ENCODE measurements at regions of chr19 and their contacts with region 1.

Region 1: DNA sequence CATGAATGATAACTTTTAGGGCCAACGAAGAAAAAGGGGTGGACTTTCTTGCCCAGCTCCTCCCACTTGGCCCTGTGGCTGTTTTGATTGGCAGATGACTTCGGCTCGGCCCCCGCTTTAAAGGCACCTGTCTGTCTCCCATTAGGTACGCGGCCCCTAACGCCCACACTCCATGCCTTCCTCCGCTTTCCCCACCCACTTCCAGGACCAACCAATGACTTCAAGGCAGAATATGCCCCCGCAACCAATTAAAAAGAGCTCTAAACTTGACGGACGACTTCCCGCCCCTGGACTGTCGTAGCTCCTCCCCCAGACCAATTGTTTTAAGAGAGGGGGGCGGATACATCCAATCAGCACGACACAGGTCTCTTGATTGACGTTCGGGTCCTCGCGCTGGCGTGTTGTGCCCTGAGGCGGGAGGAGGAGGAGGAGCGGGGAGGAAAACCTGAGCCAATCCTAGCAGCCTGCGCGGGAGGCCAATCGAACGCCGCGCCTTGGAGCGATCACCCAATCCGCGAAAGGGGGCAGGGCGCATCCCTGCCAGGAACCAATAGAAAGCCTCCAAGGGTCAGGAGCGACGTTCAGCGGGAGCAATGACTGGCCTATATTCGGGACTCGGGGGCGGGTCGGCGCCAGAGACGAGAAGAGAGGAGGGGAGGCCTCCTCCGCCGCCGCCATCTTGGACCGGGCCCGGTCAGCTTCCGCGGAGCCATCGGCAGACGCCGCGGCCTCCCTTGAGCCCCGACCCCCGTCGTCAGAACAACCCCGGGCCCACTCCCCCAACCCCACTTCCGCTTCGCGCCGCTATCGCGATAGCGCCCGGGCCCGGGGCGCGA is at the start of gene CNOT3:
- DNase-seq: peak; percentile 100
- ATAC-seq: peak; percentile 87
- H3K4me3 ChIP-seq: peak within 1 kb of the TSS; percentile 51
- H3K27ac ChIP-seq: peak within 1 kb of the TSS; percentile 71
- H3K4me1 ChIP-seq: peaks cover 10% of the 10 kb centered on the region
- H3K27me3 ChIP-seq: no peaks in the 10 kb centered on the region
- CTCF ChIP-seq: no peak
- POLR2A ChIP-seq: peak; percentile 87
- RAD21 ChIP-seq: no peak
- total RNA-seq, gene CNOT3: 5.4 and 10.6 TPM in 2 replicates

Region 2: GRCh38 chr19:53867225-53868090 is 269.8 kb before region 1 on chr19 and contains the start of gene MYADM:
- CTCF ChIA-PET with region 1: no interaction called
- POLR2A ChIA-PET with region 1: interaction called, 3 read pairs
- dilution Hi-C with region 1: no loop called
- in situ Hi-C with region 1: no loop called
- intact Hi-C with region 1: loop called (anchors 1 kb)
- DNase-seq: peak; percentile 97
- ATAC-seq: peak; percentile 81
- H3K4me3 ChIP-seq: peak within 1 kb of the TSS; percentile 95
- H3K27ac ChIP-seq: peak within 1 kb of the TSS; percentile 97
- H3K4me1 ChIP-seq: peaks cover 7% of the 10 kb centered on the region
- H3K27me3 ChIP-seq: no peaks in the 10 kb centered on the region
- CTCF ChIP-seq: no peak
- POLR2A ChIP-seq: peak; percentile 97
- RAD21 ChIP-seq: no peak
- total RNA-seq, gene MYADM: 4.8 and 5.3 TPM in 2 replicates

Region 3: GRCh38 chr19:54115109-54116063 is 21.9 kb before region 1 on chr19 and contains the starts of genes PRPF31 and TFPT:
- CTCF ChIA-PET with region 1: no interaction called
- POLR2A ChIA-PET with region 1: interaction called, 10 read pairs
- dilution Hi-C with region 1: no loop called
- in situ Hi-C with region 1: no loop called
- intact Hi-C with region 1: loop called (anchors 2 kb)
- DNase-seq: peak; percentile 98
- ATAC-seq: peak; percentile 97
- H3K4me3 ChIP-seq: peak within 1 kb of the TSS; percentile 61
- H3K27ac ChIP-seq: peak within 1 kb of the TSS; percentile 94
- H3K4me1 ChIP-seq: peaks cover 6% of the 10 kb centered on the region
- H3K27me3 ChIP-seq: no peaks in the 10 kb centered on the region
- CTCF ChIP-seq: no peak
- POLR2A ChIP-seq: peak; percentile 68; the same call in 1 of the 2 replicates
- RAD21 ChIP-seq: no peak
- total RNA-seq, gene PRPF31: 66.1 and 66.9 TPM in 2 replicates
- total RNA-seq, gene TFPT: 7.9 and 11.9 TPM in 2 replicates

Region 4: DNA sequence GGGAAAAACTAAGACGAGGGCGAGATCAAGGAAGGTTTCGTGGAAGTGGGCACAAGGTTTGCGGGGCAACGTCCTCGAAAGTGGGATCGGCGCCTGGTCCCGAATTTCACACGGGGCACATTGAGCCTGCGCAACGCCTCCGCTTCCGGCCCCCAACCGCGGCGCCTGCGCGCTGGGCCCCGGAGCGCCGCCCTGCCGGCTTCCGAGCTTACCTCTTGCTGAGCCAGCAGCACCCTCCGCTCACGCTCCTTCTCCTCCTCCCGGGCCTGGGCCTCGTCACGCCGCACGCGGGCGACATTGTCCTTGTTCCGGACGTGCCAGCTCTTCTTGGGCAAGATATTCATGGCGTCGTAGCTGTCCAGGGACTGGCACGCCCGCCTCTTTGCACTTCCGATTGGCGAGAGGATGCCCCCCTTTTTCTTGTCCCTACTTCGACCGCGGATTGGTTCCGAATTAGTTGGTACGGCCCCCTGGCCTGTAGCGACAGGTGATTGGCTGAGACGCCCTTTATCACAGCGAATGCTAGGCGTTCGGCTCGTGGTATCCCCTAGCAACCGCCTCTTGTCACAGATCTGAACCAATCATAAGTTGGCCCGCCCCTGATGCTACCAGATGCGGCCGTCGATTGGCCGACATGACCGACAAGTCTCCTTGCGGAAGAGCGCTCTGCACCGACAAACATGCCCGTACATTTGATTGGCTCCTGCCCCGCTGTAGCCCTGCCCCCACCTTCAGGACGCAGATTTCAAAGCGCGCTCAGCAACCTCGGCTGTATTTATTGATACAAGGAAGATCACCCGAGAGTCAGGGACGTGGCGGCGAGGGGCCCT is 22.3 kb after region 1 on chr19 and contains the start of gene LENG1:
- CTCF ChIA-PET with region 1: no interaction called
- POLR2A ChIA-PET with region 1: interaction called, 5 read pairs
- dilution Hi-C with region 1: no loop called
- in situ Hi-C with region 1: no loop called
- intact Hi-C with region 1: loop called (anchors 1 kb)
- DNase-seq: peak; percentile 100
- ATAC-seq: peak; percentile 91
- H3K4me3 ChIP-seq: peak within 1 kb of the TSS; percentile 60
- H3K27ac ChIP-seq: peak within 1 kb of the TSS; percentile 88
- H3K4me1 ChIP-seq: peaks cover 11% of the 10 kb centered on the region
- H3K27me3 ChIP-seq: no peaks in the 10 kb centered on the region
- CTCF ChIP-seq: peak; percentile 33; the same call in 1 of the 2 replicates
- POLR2A ChIP-seq: peak; percentile 96
- RAD21 ChIP-seq: no peak
- total RNA-seq, gene LENG1: 2.7 and 5.0 TPM in 2 replicates

Region 5: DNA sequence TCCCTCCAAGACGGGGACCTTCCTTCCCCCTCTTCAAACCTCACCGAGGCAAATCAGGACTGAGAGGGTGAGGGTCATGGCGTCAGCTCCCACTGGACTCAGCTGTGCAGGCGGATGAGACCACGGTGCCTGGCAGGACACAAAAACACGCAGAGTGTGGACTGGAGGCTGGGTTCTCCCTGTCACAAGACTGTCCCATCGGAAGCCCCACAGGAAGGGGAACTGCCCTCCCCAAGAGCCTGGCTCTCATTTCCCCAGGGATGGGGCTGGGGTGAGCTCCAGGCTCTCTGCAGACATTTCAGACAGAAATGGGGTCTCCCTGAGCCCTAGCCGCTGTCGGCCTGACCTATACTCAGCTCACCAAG is 119.8 kb after region 1 on chr19 and contains the start of gene LILRB5:
- CTCF ChIA-PET with region 1: no interaction called
- POLR2A ChIA-PET with region 1: no interaction called
- dilution Hi-C with region 1: no loop called
- in situ Hi-C with region 1: no loop called
- intact Hi-C with region 1: no loop called
- DNase-seq: no peak
- ATAC-seq: no peak
- H3K4me3 ChIP-seq: no peak within 1 kb of the TSS
- H3K27ac ChIP-seq: no peak within 1 kb of the TSS
- H3K4me1 ChIP-seq: no peaks in the 10 kb centered on the region
- H3K27me3 ChIP-seq: peaks cover 22% of the 10 kb centered on the region
- CTCF ChIP-seq: no peak
- POLR2A ChIP-seq: no peak
- RAD21 ChIP-seq: no peak
- total RNA-seq, gene LILRB5: not detected in 2 replicates

Region 6: DNA sequence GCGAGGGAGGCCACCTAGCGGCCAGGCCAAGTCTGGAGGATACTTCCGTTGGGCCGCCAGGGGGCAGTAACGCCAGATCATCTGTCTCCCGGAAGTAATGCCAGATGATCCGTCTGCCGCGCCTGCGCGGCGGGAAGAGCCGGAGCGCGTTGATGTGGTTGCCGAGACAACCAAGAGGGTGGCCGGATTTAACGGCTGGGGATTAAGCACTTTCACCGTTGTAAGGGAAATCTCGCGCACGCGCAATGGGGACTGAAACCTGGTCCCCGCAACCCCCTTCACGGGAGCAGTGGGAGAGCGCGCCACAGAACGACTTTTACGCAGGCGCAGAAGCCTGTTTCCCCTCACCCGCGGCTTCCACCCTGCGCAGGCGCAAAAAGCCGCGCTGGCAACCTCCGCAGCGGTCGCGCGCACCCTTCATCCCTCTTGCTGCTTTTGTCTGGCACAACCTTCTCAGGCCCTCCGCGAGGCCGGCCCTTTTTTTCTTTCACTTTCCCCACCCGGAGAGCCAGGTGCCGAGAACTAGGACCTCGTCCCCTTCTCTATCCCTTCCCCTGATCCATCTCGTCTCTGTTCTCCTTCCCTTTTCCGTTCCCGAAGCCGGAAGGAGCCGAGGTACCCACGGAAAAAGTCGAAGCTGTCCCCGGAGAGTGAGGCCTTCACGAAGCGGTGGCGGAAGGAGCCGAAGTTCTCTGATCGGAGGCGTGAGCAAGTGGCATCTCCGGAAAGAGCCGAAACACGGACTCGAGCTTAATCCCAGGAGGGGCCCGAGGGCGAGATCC is 1516.6 kb after region 1 on chr19:
- CTCF ChIA-PET with region 1: interaction called, 3 read pairs
- POLR2A ChIA-PET with region 1: no interaction called
- dilution Hi-C with region 1: no loop called
- in situ Hi-C with region 1: loop called (anchors 25 kb)
- intact Hi-C with region 1: no loop called
- DNase-seq: peak; percentile 99
- ATAC-seq: peak; percentile 81
- H3K4me3 ChIP-seq: peak overlapping the region; percentile 71
- H3K27ac ChIP-seq: peak overlapping the region; percentile 98
- H3K4me1 ChIP-seq: peaks cover 12% of the 10 kb centered on the region
- H3K27me3 ChIP-seq: no peaks in the 10 kb centered on the region
- CTCF ChIP-seq: peak; percentile 100
- POLR2A ChIP-seq: peak; percentile 70; the same call in 1 of the 2 replicates
- RAD21 ChIP-seq: peak; percentile 73

Measured in IMR-90 (cell line).